Activated CD4-positive, alpha-beta T cell treated with anti-CD3 and anti-CD28 coated beads for 36 hours (primary cell): ENCODE measurements at regions of chr7 and their contacts with region 1.

Region 1: GRCh38 chr7:142782922-142783900 is 12.4 kb downstream of the PRSS2 start:
- DNase-seq: peak; percentile 87
- ATAC-seq: peak; percentile 50
- H3K4me3 Mint-ChIP-seq: peak overlapping the region; percentile 66
- H3K27ac Mint-ChIP-seq: peak overlapping the region; percentile 90
- H3K4me1 Mint-ChIP-seq: peaks cover 6% of the 10 kb centered on the region
- H3K27me3 Mint-ChIP-seq: no peaks in the 10 kb centered on the region

Region 2: DNA sequence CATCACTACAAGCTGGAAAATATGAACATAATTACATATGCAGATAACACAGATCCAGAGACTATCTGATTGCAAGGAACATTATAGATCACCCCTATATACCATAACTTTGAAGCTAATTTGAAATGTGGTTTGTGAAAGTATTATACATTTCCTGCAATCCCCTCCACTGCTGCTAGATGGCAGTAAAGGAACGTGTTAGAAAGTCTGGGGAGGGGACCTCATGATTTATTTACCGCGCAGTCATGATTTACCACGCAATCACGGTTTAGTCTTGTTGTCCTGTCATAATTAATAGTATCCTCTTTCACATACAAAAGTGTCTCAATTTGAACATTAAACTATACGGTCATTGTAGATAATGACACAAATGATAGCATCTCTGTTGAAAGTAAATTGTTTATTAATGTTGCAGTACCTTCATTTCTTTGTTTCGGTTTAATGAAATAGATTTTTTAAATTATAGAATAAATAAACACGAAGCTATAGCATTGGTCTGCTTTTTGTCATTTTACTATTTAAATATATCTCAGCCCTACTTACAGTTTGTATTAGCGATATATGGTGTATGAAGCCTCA is 179.3 kb before region 1 on chr7:
- CTCF ChIA-PET with region 1: interaction called, 17 read pairs
- POLR2A ChIA-PET with region 1: no interaction called
- intact Hi-C with region 1: no loop called
- DNase-seq: peak; percentile 69
- ATAC-seq: peak; percentile 60
- H3K4me3 Mint-ChIP-seq: peak overlapping the region; percentile 31
- H3K27ac Mint-ChIP-seq: peak overlapping the region; percentile 67
- H3K4me1 Mint-ChIP-seq: peaks cover 23% of the 10 kb centered on the region
- H3K27me3 Mint-ChIP-seq: peaks cover 3% of the 10 kb centered on the region

Region 3: DNA sequence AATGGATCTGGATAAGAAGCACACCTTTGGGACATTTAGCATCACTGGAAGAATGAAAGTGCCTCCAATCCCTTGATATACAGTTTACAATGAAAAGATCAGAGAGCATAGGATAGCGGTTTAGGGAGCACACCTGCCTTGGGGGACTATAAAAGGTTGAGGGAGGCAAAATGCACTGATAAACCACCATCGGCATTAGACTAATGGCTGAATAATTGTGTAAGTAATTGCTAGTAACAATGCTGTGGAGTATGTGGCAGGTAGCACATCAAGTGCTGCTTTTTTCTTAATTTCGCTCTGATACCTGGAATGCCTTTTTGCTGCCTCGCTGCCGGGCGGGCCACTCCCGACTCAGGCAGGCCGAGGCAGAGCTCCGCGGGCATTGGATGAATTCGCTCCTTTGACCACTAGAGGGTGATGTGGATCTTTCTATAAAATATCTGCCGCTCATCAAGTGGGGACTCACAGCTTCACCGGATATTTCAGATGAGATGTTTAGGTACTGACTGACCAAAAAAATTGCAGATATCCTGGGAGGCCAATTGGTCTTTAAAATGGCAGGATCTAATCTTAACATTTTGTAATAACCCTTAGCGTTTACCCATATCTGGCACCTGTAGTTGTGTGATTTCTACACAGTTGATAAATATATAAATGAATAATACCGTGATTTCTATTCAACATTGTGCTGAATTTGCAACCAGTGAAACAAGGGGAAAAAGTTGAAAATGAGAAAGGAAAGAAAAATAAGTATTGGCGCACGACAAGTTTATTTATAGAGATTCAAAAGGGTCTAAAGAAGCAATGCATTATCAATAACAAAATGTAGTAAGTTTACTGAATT is 150.7 kb before region 1 on chr7:
- CTCF ChIA-PET with region 1: interaction called, 56 read pairs
- POLR2A ChIA-PET with region 1: interaction called, 13 read pairs
- intact Hi-C with region 1: loop called (anchors 1 kb)
- DNase-seq: peak; percentile 65
- ATAC-seq: peak; percentile 59
- H3K4me3 Mint-ChIP-seq: peak overlapping the region; percentile 12
- H3K27ac Mint-ChIP-seq: peak overlapping the region; percentile 42
- H3K4me1 Mint-ChIP-seq: peaks cover 10% of the 10 kb centered on the region
- H3K27me3 Mint-ChIP-seq: peaks cover 3% of the 10 kb centered on the region

Region 4: DNA sequence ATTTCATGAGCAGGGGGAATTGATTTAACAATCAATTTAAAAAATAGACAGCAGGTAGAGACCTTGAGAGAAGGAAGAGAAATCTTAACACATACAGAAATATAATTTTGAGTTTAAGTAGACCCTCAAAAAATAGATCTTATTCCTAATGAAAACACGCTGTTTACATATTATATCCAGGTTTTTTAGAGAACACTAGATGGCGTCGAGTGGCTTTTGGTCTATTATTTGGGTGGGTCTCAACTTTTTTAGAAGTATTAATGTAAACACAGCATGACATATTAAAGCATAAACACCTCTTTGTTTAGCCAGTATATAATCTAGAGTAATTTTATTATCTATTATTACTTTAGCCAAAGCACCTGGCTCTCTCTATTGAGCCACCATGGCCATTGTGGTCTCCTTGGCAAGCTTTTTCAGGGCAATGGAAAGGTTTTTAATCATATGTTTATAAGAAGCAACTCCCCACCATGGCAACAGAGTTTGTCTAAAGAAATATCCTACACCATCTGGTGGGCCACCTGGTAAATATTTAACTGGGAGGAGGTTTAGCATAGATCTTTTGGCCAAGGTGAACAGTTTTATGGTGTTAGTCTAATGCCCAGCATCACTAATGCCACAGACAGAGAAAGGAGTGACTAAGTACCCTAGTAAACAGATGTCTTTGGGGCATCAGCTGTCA is 93.6 kb before region 1 on chr7:
- CTCF ChIA-PET with region 1: interaction called, 3 read pairs
- POLR2A ChIA-PET with region 1: interaction called, 3 read pairs
- intact Hi-C with region 1: loop called in 1 of 2 experiments (anchors 5 kb)
- DNase-seq: no peak
- ATAC-seq: no peak
- H3K4me3 Mint-ChIP-seq: no peak overlapping the region
- H3K27ac Mint-ChIP-seq: peak overlapping the region; percentile 14
- H3K4me1 Mint-ChIP-seq: peaks cover 21% of the 10 kb centered on the region
- H3K27me3 Mint-ChIP-seq: no peaks in the 10 kb centered on the region

Region 5: GRCh38 chr7:142796608-142797385 is 13.6 kb after region 1 on chr7:
- CTCF ChIA-PET with region 1: interaction called, 10 read pairs
- POLR2A ChIA-PET with region 1: interaction called, 112 read pairs
- intact Hi-C with region 1: loop called (anchors 1 kb)
- DNase-seq: peak; percentile 41
- ATAC-seq: no peak
- H3K4me3 Mint-ChIP-seq: peak overlapping the region; percentile 99
- H3K27ac Mint-ChIP-seq: peak overlapping the region; percentile 99
- H3K4me1 Mint-ChIP-seq: peaks cover 59% of the 10 kb centered on the region
- H3K27me3 Mint-ChIP-seq: no peaks in the 10 kb centered on the region

Region 6: GRCh38 chr7:142954680-142955268 is 171.6 kb after region 1 on chr7:
- CTCF ChIA-PET with region 1: no interaction called
- POLR2A ChIA-PET with region 1: no interaction called
- intact Hi-C with region 1: no loop called
- DNase-seq: no peak
- ATAC-seq: no peak
- H3K4me3 Mint-ChIP-seq: no peak overlapping the region
- H3K27ac Mint-ChIP-seq: no peak overlapping the region
- H3K4me1 Mint-ChIP-seq: no peaks in the 10 kb centered on the region
- H3K27me3 Mint-ChIP-seq: peaks cover 10% of the 10 kb centered on the region